Dorsolateral prefrontal cortex (tissue), 120 donors: ENCODE measurements at regions of chr15 and their contacts with region 1.

Region 1: GRCh38 chr15:41022487-41023090 is 69.3 kb downstream of the CHAC1 start:
- DNase-seq: peak in 6 of 10 donors; percentile 35 to 51 (median 48)
- H3K4me3 ChIP-seq: no peak overlapping the region
- H3K27ac ChIP-seq: no peak overlapping the region
- H3K27me3 ChIP-seq: no peaks in the 10 kb centered on the region
- CTCF ChIP-seq: peak; percentile 23 to 87 (median 76)

Region 2: GRCh38 chr15:40941528-40942336 is 80.9 kb before region 1 on chr15:
- intact Hi-C with region 1: loop called in 1 of 2 experiments (anchors 5 kb)
- DNase-seq: peak in 9 of 10 donors; percentile 44 to 90 (median 72)
- H3K4me3 ChIP-seq: peak overlapping the region; percentile 37 to 74 (median 61)
- H3K27ac ChIP-seq: peak overlapping the region in 58 of 59 donors; percentile 15 to 91 (median 80)
- H3K27me3 ChIP-seq: no peaks in the 10 kb centered on the region
- CTCF ChIP-seq: peak in 46 of 56 donors; percentile 19 to 84 (median 46)

Region 3: DNA sequence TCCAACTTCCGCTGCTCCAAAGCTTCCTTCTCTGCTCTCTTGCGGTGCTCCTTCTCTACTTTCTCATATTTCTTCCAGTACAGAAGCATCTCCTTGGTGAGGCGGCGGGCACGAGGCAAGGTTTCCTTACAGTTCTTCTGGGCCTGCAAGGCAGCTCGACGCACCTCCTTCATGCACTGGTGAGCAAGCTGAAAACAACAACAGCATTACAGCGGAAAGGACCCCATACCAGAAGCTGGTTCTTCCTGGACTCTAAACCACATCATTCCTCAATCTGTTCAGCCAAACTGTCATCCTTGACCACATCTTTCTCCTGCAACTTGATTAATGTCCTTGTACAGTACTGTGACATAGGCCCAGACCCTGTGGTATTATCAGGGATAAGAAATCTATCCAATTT is 57.1 kb after region 1 on chr15:
- intact Hi-C with region 1: no loop called
- DNase-seq: no peak
- H3K4me3 ChIP-seq: no peak overlapping the region
- H3K27ac ChIP-seq: no peak overlapping the region
- H3K27me3 ChIP-seq: no peaks in the 10 kb centered on the region
- CTCF ChIP-seq: no peak